Ovary (tissue), 10 donors: ENCODE measurements at regions of chr22 and their contacts with region 1.

Region 1: DNA sequence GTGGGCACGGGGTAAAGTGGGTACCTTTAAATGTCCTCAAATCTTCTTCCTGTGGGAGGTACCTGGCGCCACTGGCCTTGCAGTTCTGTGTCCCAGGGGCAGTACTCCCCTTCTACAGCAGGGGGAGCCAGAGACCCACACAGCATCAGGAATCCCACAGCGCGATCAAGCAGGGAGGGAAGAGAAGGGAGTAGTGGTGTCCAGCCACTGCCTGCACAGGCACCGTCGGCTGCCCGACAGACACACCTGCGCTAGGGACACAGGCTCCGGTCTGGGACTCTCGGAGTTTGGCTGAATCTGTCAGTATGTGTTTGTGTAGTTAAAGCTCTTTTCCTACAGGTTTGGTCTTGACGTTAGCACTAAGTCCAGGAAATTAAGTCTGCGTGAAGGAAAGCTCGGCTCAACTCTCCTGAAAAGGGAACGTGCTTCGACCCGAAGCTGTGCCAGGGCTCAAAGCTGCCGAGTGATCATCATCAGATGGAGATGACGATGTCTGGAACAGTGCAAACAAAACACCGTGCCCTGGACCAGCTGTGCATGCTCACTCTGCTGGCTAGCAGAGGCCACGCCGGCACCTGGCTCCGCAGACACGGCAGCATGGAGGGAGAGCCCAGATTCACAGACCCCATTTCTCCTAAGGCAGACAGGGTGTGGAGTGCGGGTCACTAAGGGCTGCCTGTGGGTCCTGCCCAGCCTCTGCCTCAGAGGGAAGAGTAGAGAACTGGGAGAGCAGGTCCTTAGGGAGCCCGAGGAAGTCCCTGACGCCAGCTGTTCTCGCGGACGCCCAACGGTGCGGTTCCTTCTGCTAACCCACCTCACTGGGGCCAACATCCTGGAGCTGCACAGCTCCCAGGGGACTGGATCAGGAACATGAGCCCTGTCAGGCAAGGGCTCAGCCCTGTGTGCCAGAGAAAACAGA is 56.0 kb upstream of the BID start:
- DNase-seq: peak; percentile 80 to 92 (median 89)
- H3K4me3 ChIP-seq: no peak overlapping the region
- H3K27ac ChIP-seq: peak overlapping the region in 1 of 2 donors; percentile 8
- H3K4me1 ChIP-seq: no peaks in the 10 kb centered on the region
- H3K27me3 ChIP-seq: no peaks in the 10 kb centered on the region
- CTCF ChIP-seq: peak; percentile 94 to 98 (median 97)
- EP300 ChIP-seq: no peak
- POLR2A ChIP-seq: no peak

Region 2: DNA sequence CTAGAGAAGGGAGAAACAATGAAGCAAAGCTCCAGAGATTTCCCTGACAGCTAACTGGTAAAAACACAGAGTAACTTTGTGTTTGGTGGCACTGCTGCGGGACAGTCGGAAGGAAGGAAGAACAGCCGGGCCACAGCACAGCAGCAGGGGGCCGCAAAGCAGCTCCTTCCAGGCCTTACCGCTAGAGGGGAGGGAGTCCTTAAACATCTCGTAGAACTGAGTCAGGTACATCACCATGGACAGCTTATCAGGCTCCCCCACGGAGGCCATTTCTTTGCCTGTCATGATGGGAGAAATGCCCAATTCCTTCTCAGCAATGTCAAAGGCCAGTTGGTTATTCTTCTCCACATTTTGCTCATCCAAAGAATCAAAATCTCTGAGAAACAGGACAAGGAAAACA is 58.6 kb after region 1 on chr22:
- intact Hi-C with region 1: loop called in 3 of 4 experiments (anchors 2 to 10 kb)
- DNase-seq: no peak
- H3K4me3 ChIP-seq: no peak overlapping the region
- H3K27ac ChIP-seq: no peak overlapping the region
- H3K4me1 ChIP-seq: no peaks in the 10 kb centered on the region
- H3K27me3 ChIP-seq: no peaks in the 10 kb centered on the region
- CTCF ChIP-seq: no peak
- EP300 ChIP-seq: no peak
- POLR2A ChIP-seq: no peak

Region 3: DNA sequence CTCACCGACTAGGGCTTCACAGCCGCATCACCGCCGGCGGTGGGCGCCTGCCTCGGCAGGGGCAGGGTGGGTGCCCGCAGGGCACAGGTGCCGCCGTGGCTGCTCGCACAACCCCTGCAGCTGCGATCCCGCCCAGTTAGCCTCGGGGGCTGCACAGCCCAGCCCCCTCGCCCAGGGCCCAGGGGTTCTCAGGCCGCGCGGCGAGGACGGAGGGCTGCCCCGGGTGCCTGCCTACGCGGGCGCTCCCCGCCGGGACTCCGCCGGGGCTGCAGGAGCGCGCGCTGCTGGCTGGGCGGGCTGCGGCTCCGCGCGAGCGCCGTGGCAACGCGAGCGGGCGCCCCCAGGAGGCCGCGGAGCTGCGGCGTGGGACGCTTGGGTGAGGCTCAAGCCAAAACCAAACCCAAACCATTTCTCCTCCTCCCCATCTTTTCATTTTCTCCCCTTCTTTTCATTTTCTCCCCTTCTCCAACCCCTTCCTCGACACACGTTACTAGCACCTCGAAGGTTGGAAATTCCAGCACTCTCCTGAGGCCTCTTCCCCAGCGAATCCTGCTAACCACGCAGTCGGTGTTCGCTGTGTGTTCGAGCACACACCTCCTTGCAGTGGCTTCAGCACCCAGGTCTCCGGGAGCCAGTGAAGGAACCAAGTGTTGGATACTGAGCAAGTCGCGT is 194.1 kb after region 1 on chr22 and contains the start of gene MICAL3:
- intact Hi-C with region 1: loop called in 1 of 4 experiments (anchors 5 kb)
- DNase-seq: peak; percentile 50 to 80 (median 68)
- H3K4me3 ChIP-seq: peak within 1 kb of the TSS; percentile 59
- H3K27ac ChIP-seq: peak within 1 kb of the TSS; percentile 73 to 77
- H3K4me1 ChIP-seq: peaks cover 6% of the 10 kb centered on the region
- H3K27me3 ChIP-seq: no peaks in the 10 kb centered on the region
- CTCF ChIP-seq: peak; percentile 36 to 69 (median 57)
- EP300 ChIP-seq: no peak
- POLR2A ChIP-seq: no peak
- total RNA-seq, gene MICAL3: 17.5 to 106 (median 81.6) TPM